Heart left ventricle (tissue), 16 donors: ENCODE measurements at regions of chr3 and their contacts with region 1.

Region 1: GRCh38 chr3:157088601-157089454 is 71.1 kb downstream of the CCNL1 start:
- DNase-seq: peak; percentile 97 to 99 (median 98)
- ATAC-seq: peak; percentile 83 to 88 (median 84)
- H3K4me3 ChIP-seq: peak overlapping the region; percentile 25 to 73 (median 61)
- H3K27ac ChIP-seq: peak overlapping the region; percentile 96 to 100 (median 99)
- H3K4me1 ChIP-seq: peaks cover 5 to 68% (median 49%) of the 10 kb centered on the region in 12 donors
- H3K27me3 ChIP-seq: no peaks in the 10 kb centered on the region
- CTCF ChIP-seq: peak in 5 of 12 donors; percentile 7 to 38 (median 24)
- POLR2A ChIP-seq: peak; percentile 1 to 88

Region 2: GRCh38 chr3:156547637-156548036 is 541.2 kb before region 1 on chr3:
- intact Hi-C with region 1: loop called in 7 of 10 experiments (anchors 5 kb)
- DNase-seq: peak in 1 of 5 donors; percentile 45
- ATAC-seq: peak; percentile 49 to 78 (median 61)
- H3K4me3 ChIP-seq: no peak overlapping the region
- H3K27ac ChIP-seq: peak overlapping the region; percentile 35 to 80 (median 58)
- H3K4me1 ChIP-seq: peaks cover 8 to 99% (median 74%) of the 10 kb centered on the region in 12 donors
- H3K27me3 ChIP-seq: no peaks in the 10 kb centered on the region
- CTCF ChIP-seq: no peak
- POLR2A ChIP-seq: no peak

Region 3: GRCh38 chr3:156674046-156674910 is 414.6 kb before region 1 on chr3 and contains the start of gene TIPARP:
- intact Hi-C with region 1: loop called in 6 of 10 experiments (anchors 2 to 5 kb)
- DNase-seq: peak; percentile 99 to 100 (median 100)
- ATAC-seq: peak; percentile 92 to 98 (median 96)
- H3K4me3 ChIP-seq: peak within 1 kb of the TSS; percentile 66 to 97 (median 80)
- H3K27ac ChIP-seq: peak within 1 kb of the TSS; percentile 88 to 99 (median 96)
- H3K4me1 ChIP-seq: peaks cover 0 to 51% (median 29%) of the 10 kb centered on the region in 12 donors
- H3K27me3 ChIP-seq: no peaks in the 10 kb centered on the region
- CTCF ChIP-seq: peak; percentile 55 to 88 (median 77)
- POLR2A ChIP-seq: peak; percentile 81 to 99
- total RNA-seq, gene TIPARP: 17.8 to 46.8 (median 33.8) TPM

Region 4: GRCh38 chr3:156826144-156826895 is 262.5 kb before region 1 on chr3 and contains the start of gene LEKR1:
- intact Hi-C with region 1: loop called in 5 of 10 experiments (anchors 5 to 10 kb)
- DNase-seq: peak; percentile 89 to 93 (median 91)
- ATAC-seq: peak; percentile 85 to 98 (median 96)
- H3K4me3 ChIP-seq: peak within 1 kb of the TSS; percentile 56 to 94 (median 67)
- H3K27ac ChIP-seq: peak within 1 kb of the TSS; percentile 83 to 96 (median 89)
- H3K4me1 ChIP-seq: peaks cover 0 to 17% (median 6%) of the 10 kb centered on the region in 12 donors
- H3K27me3 ChIP-seq: no peaks in the 10 kb centered on the region
- CTCF ChIP-seq: peak in 1 of 12 donors; percentile 4
- POLR2A ChIP-seq: peak; percentile 14 to 72
- total RNA-seq, gene LEKR1: 0.23 to 1.8 (median 1.0) TPM in 8 of 9 donors, not detected in the other

Region 5: DNA sequence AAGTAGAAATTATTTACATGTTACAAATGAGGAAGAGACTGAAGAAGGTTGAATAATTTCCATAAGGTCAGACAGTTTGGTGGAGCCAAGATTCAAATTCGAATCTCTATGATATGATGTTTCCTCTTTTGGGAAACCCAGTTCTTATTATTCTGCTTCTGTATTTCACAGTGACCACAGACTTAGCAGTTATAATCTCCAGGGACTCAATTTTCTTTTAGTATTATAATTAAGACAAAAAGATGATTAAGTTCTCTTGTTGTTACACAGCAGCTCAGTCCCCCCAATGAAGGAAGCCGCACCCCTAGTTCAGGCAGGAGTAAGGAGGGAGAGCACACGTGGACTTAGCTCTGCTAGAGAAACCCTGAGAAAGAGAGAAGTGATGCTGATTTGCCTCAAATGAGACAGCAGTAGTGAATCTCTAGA is 59.5 kb before region 1 on chr3:
- intact Hi-C with region 1: no loop called
- DNase-seq: no peak
- ATAC-seq: no peak
- H3K4me3 ChIP-seq: no peak overlapping the region
- H3K27ac ChIP-seq: no peak overlapping the region
- H3K4me1 ChIP-seq: no peaks in the 10 kb centered on the region
- H3K27me3 ChIP-seq: no peaks in the 10 kb centered on the region
- CTCF ChIP-seq: no peak
- POLR2A ChIP-seq: no peak

Region 6: DNA sequence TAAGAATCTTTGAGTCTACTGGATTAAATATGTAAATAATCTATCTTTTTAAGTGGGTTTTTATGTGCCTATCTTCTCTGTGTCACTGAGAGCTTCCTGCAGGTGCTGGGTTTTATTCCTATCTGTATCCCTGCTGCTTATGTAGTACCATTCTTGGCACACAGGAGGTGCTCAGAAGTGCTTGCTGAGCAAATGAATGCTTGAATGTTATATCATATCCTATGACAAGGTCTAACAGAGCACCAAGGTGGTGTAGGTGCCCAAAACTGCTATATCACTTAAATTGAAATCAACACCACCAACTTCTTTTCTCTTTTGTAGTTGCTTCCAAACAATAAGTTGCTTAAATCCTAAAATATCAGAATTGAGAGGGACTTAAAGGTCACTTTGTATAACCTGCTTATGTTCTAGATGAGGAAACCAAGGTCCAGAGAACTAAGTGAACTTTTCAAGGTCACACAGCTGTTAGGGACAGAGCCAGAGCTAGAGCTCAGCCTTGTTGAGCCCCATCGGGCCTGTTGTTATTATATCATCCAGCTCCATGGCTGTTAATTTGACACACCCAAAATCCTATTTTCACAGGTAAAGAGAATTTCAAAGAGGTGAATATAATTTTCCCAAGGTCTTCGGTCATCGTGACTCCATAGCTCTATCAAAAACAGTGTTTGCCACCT is 25.1 kb after region 1 on chr3:
- intact Hi-C with region 1: loop called in 2 of 10 experiments (anchors 2 kb)
- DNase-seq: no peak
- ATAC-seq: no peak
- H3K4me3 ChIP-seq: no peak overlapping the region
- H3K27ac ChIP-seq: peak overlapping the region in 11 of 12 donors; percentile 35 to 82 (median 76)
- H3K4me1 ChIP-seq: peaks cover 0 to 59% (median 19%) of the 10 kb centered on the region in 12 donors
- H3K27me3 ChIP-seq: no peaks in the 10 kb centered on the region
- CTCF ChIP-seq: peak in 4 of 12 donors; percentile 4 to 10 (median 9)
- POLR2A ChIP-seq: no peak

Region 7: DNA sequence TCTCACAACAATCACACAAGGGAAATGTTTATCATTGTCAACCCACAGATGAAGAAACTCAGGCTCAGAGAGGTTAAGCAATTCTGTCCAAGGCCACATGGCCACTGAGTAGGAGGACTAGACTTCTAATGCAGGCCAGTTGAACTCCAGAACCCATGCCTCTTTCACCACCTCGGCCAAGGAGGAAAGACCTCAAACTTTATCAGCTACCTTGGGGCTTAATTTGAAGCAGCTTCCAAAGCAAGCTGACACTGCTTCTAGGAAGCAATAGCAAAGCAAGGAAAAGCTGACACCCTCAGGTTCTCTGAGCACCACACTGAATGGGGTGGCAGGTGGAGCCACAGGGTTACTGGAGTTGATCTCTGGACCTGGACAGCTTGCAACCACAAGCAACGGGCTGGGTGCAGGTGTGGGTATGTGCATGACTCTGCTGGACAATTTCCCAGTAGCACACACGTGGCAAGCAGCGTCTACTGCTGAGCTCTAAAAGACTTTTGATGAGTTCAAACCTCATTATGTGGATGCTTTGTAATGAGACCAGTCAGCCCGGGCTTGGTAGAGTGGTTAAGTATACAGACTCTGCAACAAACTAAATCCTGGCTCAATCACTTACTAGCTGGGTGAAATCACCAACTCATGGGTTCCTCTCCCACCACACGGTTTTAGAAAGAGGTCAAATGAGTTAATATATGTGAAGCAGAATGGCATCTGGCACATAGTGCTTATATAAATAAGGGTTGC is 48.0 kb after region 1 on chr3:
- intact Hi-C with region 1: loop called in 7 of 10 experiments (anchors 1 to 5 kb)
- DNase-seq: no peak
- ATAC-seq: peak; percentile 10 to 60 (median 20)
- H3K4me3 ChIP-seq: no peak overlapping the region
- H3K27ac ChIP-seq: peak overlapping the region; percentile 19 to 71 (median 56)
- H3K4me1 ChIP-seq: peaks cover 3 to 57% (median 36%) of the 10 kb centered on the region in 12 donors
- H3K27me3 ChIP-seq: no peaks in the 10 kb centered on the region
- CTCF ChIP-seq: no peak
- POLR2A ChIP-seq: no peak